Ascending aorta (tissue), 2 donors: ENCODE measurements at regions of chr9 and their contacts with region 1.

Region 1: GRCh38 chr9:899440-900184 is 58.1 kb downstream of the DMRT1 start:
- DNase-seq: no peak
- H3K4me3 ChIP-seq: no peak overlapping the region
- H3K27ac ChIP-seq: no peak overlapping the region
- H3K4me1 ChIP-seq: no peaks in the 10 kb centered on the region
- H3K27me3 ChIP-seq: no peaks in the 10 kb centered on the region
- CTCF ChIP-seq: no peak

Region 2: DNA sequence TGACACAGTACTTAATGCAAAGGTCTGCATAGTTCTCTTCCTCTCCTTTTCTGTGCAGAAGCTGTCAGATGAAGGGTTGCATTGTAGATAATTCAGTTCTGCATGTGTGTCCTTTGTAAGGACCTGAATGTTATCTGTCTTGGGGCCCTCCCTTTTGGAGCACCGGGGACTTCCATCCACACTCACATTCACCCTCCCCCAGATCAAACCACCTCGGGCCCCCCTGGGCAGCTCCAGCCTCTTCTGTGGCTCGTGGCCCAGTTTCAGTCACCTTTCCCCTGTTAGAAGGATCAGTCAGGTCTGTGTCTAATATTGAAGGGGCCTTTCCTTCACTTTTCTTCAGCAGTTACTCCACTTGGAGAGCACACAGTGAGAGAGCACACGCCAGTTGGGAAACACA is 47.1 kb before region 1 on chr9:
- intact Hi-C with region 1: no loop called
- DNase-seq: no peak
- H3K4me3 ChIP-seq: no peak overlapping the region
- H3K27ac ChIP-seq: no peak overlapping the region
- H3K4me1 ChIP-seq: no peaks in the 10 kb centered on the region
- H3K27me3 ChIP-seq: no peaks in the 10 kb centered on the region
- CTCF ChIP-seq: no peak

Region 3: GRCh38 chr9:1009101-1009707 is 109.6 kb after region 1 on chr9:
- intact Hi-C with region 1: loop called (anchors 5 kb)
- DNase-seq: peak; percentile 12 to 87
- H3K4me3 ChIP-seq: no peak overlapping the region
- H3K27ac ChIP-seq: no peak overlapping the region
- H3K4me1 ChIP-seq: no peaks in the 10 kb centered on the region
- H3K27me3 ChIP-seq: no peaks in the 10 kb centered on the region
- CTCF ChIP-seq: peak; percentile 79 to 95 (median 90)